HEK293T (cell line): ENCODE measurements at regions of chr12 and their contacts with region 1.

Region 1: GRCh38 chr12:55659486-55660385 is 23.0 kb downstream of the OR10P1 start:
- DNase-seq: no peak

Region 2: GRCh38 chr12:55647027-55647426 is 12.7 kb before region 1 on chr12:
- CTCF ChIA-PET with region 1: interaction called, 35 read pairs
- POLR2A ChIA-PET with region 1: interaction called, 7 read pairs
- DNase-seq: no peak

Region 3: DNA sequence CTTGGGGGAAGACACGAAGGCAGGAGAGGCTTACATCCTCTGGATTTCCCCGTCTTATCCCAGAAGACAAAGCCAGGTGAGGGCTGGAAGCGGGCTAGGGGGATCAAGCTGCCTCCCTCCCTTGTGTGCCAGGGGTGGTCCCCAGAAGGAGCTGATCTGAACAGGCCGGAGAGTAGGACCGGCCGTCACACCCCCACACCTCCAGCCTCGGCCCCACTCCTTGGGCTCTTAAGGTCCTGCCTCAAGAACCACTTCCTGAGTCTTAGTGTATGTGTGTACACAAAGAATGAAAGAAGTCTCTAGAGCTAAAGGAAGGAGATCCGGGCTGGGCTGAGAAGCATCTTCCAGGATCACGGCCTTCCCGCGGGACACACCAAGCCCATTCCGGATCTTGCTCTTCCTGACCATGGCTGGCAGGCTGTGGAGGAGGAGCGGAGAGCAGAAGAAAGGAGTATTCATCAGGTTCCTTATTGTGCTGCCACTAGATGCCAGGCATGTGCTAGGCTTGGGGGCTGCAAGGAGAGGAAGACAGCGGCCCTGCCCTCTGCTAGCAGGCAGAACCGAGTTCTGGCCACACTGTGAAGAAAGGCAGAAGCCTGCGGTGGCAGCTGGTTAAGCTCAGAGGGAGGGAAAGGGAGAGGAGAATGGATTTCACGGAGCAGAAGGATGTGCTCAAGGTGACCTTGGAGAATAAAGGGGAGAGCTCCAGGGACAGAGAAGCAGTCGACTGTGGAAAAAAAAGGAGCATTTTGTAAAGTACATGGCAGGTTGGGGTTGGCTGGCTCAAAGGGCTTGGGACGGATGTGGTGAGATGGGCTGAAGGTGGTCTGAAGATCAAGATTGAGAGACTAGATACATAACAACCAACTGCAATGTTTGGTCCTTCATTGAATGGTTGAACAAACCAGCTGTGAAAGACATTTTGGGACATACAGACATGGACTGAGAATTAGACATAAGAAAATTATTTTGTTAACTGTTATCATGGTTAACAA is 70.4 kb after region 1 on chr12:
- CTCF ChIA-PET with region 1: no interaction called
- POLR2A ChIA-PET with region 1: no interaction called
- DNase-seq: no peak

Region 4: GRCh38 chr12:55789171-55789570 is 129.4 kb after region 1 on chr12:
- CTCF ChIA-PET with region 1: no interaction called
- POLR2A ChIA-PET with region 1: no interaction called
- DNase-seq: no peak